Naive thymus-derived CD4-positive, alpha-beta T cell (primary cell): ENCODE measurements at regions of chr2 and their contacts with region 1.

Region 1: GRCh38 chr2:159118115-159118858 is 149.8 kb downstream of the TANC1 start:
- DNase-seq: peak; percentile 46 to 83 (median 72)
- ATAC-seq: peak; percentile 86
- H3K4me3 ChIP-seq: no peak overlapping the region
- H3K4me3 Mint-ChIP-seq: no peak overlapping the region
- H3K27ac ChIP-seq: no peak overlapping the region
- H3K27ac Mint-ChIP-seq: peak overlapping the region in 2 of 9 donors; percentile 23 to 34
- H3K4me1 ChIP-seq: no peaks in the 10 kb centered on the region
- H3K4me1 Mint-ChIP-seq: peaks cover 0 to 13% (median 7%) of the 10 kb centered on the region in 7 donors
- H3K27me3 ChIP-seq: no peaks in the 10 kb centered on the region
- H3K27me3 Mint-ChIP-seq: no peaks in the 10 kb centered on the region

Region 2: GRCh38 chr2:158024288-158024898 is 1093.9 kb before region 1 on chr2:
- CTCF ChIA-PET with region 1: interaction called, 5 read pairs
- POLR2A ChIA-PET with region 1: no interaction called
- intact Hi-C with region 1: loop called in 1 of 2 experiments (anchors 2 kb)
- DNase-seq: peak in 8 of 9 donors; percentile 14 to 60 (median 41)
- ATAC-seq: peak; percentile 70
- H3K4me3 ChIP-seq: no peak overlapping the region
- H3K4me3 Mint-ChIP-seq: no peak overlapping the region
- H3K27ac ChIP-seq: no peak overlapping the region
- H3K27ac Mint-ChIP-seq: no peak overlapping the region
- H3K4me1 ChIP-seq: no peaks in the 10 kb centered on the region
- H3K4me1 Mint-ChIP-seq: peaks cover 4 to 15% (median 9%) of the 10 kb centered on the region in 7 donors
- H3K27me3 ChIP-seq: no peaks in the 10 kb centered on the region
- H3K27me3 Mint-ChIP-seq: peaks cover 0 to 10% (median 0%) of the 10 kb centered on the region in 5 donors

Region 3: GRCh38 chr2:158968396-158969161 is 149.7 kb before region 1 on chr2 and contains the start of gene TANC1:
- CTCF ChIA-PET with region 1: no interaction called
- POLR2A ChIA-PET with region 1: no interaction called
- intact Hi-C with region 1: loop called in 1 of 2 experiments (anchors 10 kb)
- DNase-seq: peak; percentile 16 to 72 (median 37)
- ATAC-seq: peak; percentile 83
- H3K4me3 ChIP-seq: peak within 1 kb of the TSS; percentile 31
- H3K4me3 Mint-ChIP-seq: peak within 1 kb of the TSS; percentile 80 to 89 (median 84)
- H3K27ac ChIP-seq: no peak within 1 kb of the TSS
- H3K27ac Mint-ChIP-seq: no peak within 1 kb of the TSS
- H3K4me1 ChIP-seq: peaks cover 0 to 9% of the 10 kb centered on the region in 2 donors
- H3K4me1 Mint-ChIP-seq: peaks cover 14 to 21% (median 16%) of the 10 kb centered on the region in 7 donors
- H3K27me3 ChIP-seq: peaks cover 0 to 4% of the 10 kb centered on the region in 2 donors
- H3K27me3 Mint-ChIP-seq: peaks cover 43 to 83% (median 59%) of the 10 kb centered on the region in 5 donors
- total RNA-seq, gene TANC1: 0.13 to 0.39 (median 0.21) TPM

Region 4: GRCh38 chr2:159035790-159036411 is 82.4 kb before region 1 on chr2:
- CTCF ChIA-PET with region 1: interaction called, 20 read pairs
- POLR2A ChIA-PET with region 1: no interaction called
- intact Hi-C with region 1: loop called in 1 of 2 experiments (anchors 1 kb)
- DNase-seq: peak in 7 of 9 donors; percentile 18 to 53 (median 35)
- ATAC-seq: peak; percentile 66
- H3K4me3 ChIP-seq: no peak overlapping the region
- H3K4me3 Mint-ChIP-seq: no peak overlapping the region
- H3K27ac ChIP-seq: no peak overlapping the region
- H3K27ac Mint-ChIP-seq: no peak overlapping the region
- H3K4me1 ChIP-seq: no peaks in the 10 kb centered on the region
- H3K4me1 Mint-ChIP-seq: no peaks in the 10 kb centered on the region
- H3K27me3 ChIP-seq: no peaks in the 10 kb centered on the region
- H3K27me3 Mint-ChIP-seq: peaks cover 0 to 8% (median 0%) of the 10 kb centered on the region in 5 donors

Region 5: DNA sequence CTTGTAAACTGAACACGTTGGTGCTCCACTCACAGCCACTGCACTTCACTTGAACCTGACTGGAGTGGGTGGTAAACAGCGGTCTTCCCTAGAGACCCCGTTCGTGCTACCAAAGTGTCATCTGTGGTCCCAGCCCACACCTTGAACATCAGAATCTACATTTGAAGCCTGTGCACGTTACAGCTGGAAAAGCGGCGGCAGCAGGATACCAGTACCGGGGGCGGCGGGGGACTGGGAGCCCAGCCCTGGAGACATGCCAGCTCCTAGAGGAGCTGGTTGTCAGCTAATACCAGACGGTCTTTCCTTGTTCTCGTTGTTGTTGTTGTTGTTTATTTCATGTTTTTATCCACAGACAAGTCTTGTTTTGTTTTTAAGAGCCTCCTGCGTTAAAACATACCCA is 11.5 kb after region 1 on chr2:
- CTCF ChIA-PET with region 1: interaction called, 12 read pairs
- POLR2A ChIA-PET with region 1: no interaction called
- intact Hi-C with region 1: no loop called
- DNase-seq: no peak
- ATAC-seq: no peak
- H3K4me3 ChIP-seq: no peak overlapping the region
- H3K4me3 Mint-ChIP-seq: no peak overlapping the region
- H3K27ac ChIP-seq: no peak overlapping the region
- H3K27ac Mint-ChIP-seq: peak overlapping the region in 1 of 9 donors; percentile 68
- H3K4me1 ChIP-seq: peaks cover 0 to 5% of the 10 kb centered on the region in 2 donors
- H3K4me1 Mint-ChIP-seq: peaks cover 0 to 38% (median 21%) of the 10 kb centered on the region in 7 donors
- H3K27me3 ChIP-seq: no peaks in the 10 kb centered on the region
- H3K27me3 Mint-ChIP-seq: no peaks in the 10 kb centered on the region

Region 6: GRCh38 chr2:159968279-159968900 is 850.1 kb after region 1 on chr2:
- CTCF ChIA-PET with region 1: no interaction called
- POLR2A ChIA-PET with region 1: no interaction called
- intact Hi-C with region 1: loop called (anchors 1 kb)
- DNase-seq: peak in 3 of 9 donors; percentile 1 to 8 (median 6)
- ATAC-seq: no peak
- H3K4me3 ChIP-seq: no peak overlapping the region
- H3K4me3 Mint-ChIP-seq: no peak overlapping the region
- H3K27ac ChIP-seq: no peak overlapping the region
- H3K27ac Mint-ChIP-seq: no peak overlapping the region
- H3K4me1 ChIP-seq: no peaks in the 10 kb centered on the region
- H3K4me1 Mint-ChIP-seq: no peaks in the 10 kb centered on the region
- H3K27me3 ChIP-seq: no peaks in the 10 kb centered on the region
- H3K27me3 Mint-ChIP-seq: peaks cover 0 to 5% (median 0%) of the 10 kb centered on the region in 5 donors